CD4-positive, alpha-beta memory T cell (primary cell): ENCODE measurements at regions of chr22 and their contacts with region 1.

Region 1: GRCh38 chr22:23385291-23386244 is 194.5 kb downstream of the IGLL1 start:
- DNase-seq: peak; percentile 66 to 76 (median 68)
- H3K4me3 ChIP-seq: no peak overlapping the region
- H3K4me3 Mint-ChIP-seq: no peak overlapping the region
- H3K27ac ChIP-seq: no peak overlapping the region
- H3K27ac Mint-ChIP-seq: no peak overlapping the region
- H3K4me1 ChIP-seq: peaks cover 4% of the 10 kb centered on the region
- H3K4me1 Mint-ChIP-seq: no peaks in the 10 kb centered on the region
- H3K27me3 ChIP-seq: no peaks in the 10 kb centered on the region
- H3K27me3 Mint-ChIP-seq: peaks cover 0 to 8% of the 10 kb centered on the region in 2 donors

Region 2: GRCh38 chr22:23205339-23206049 is 180.1 kb before region 1 on chr22:
- CTCF ChIA-PET with region 1: no interaction called
- POLR2A ChIA-PET with region 1: no interaction called
- intact Hi-C with region 1: no loop called
- DNase-seq: no peak
- H3K4me3 ChIP-seq: no peak overlapping the region
- H3K4me3 Mint-ChIP-seq: no peak overlapping the region
- H3K27ac ChIP-seq: no peak overlapping the region
- H3K27ac Mint-ChIP-seq: peak overlapping the region in 2 of 7 donors; percentile 24 to 59
- H3K4me1 ChIP-seq: no peaks in the 10 kb centered on the region
- H3K4me1 Mint-ChIP-seq: peaks cover 20 to 54% (median 33%) of the 10 kb centered on the region in 4 donors
- H3K27me3 ChIP-seq: no peaks in the 10 kb centered on the region
- H3K27me3 Mint-ChIP-seq: no peaks in the 10 kb centered on the region

Region 3: GRCh38 chr22:23281406-23282088 is 104.0 kb before region 1 on chr22:
- CTCF ChIA-PET with region 1: interaction called, 4 read pairs
- POLR2A ChIA-PET with region 1: no interaction called
- intact Hi-C with region 1: loop called (anchors 10 kb)
- DNase-seq: peak; percentile 70 to 79 (median 74)
- H3K4me3 ChIP-seq: no peak overlapping the region
- H3K4me3 Mint-ChIP-seq: no peak overlapping the region
- H3K27ac ChIP-seq: no peak overlapping the region
- H3K27ac Mint-ChIP-seq: peak overlapping the region in 3 of 7 donors; percentile 42 to 70 (median 52)
- H3K4me1 ChIP-seq: peaks cover 11% of the 10 kb centered on the region
- H3K4me1 Mint-ChIP-seq: peaks cover 6 to 38% (median 14%) of the 10 kb centered on the region in 4 donors
- H3K27me3 ChIP-seq: no peaks in the 10 kb centered on the region
- H3K27me3 Mint-ChIP-seq: no peaks in the 10 kb centered on the region

Region 4: GRCh38 chr22:23539135-23539838 is 153.7 kb after region 1 on chr22:
- CTCF ChIA-PET with region 1: no interaction called
- POLR2A ChIA-PET with region 1: no interaction called
- intact Hi-C with region 1: loop called (anchors 5 kb)
- DNase-seq: peak; percentile 67 to 74 (median 70)
- H3K4me3 ChIP-seq: no peak overlapping the region
- H3K4me3 Mint-ChIP-seq: peak overlapping the region in 7 of 8 donors; percentile 29 to 79 (median 51)
- H3K27ac ChIP-seq: no peak overlapping the region
- H3K27ac Mint-ChIP-seq: peak overlapping the region in 3 of 7 donors; percentile 1 to 46 (median 31)
- H3K4me1 ChIP-seq: peaks cover 4% of the 10 kb centered on the region
- H3K4me1 Mint-ChIP-seq: peaks cover 3 to 10% (median 8%) of the 10 kb centered on the region in 4 donors
- H3K27me3 ChIP-seq: no peaks in the 10 kb centered on the region
- H3K27me3 Mint-ChIP-seq: peaks cover 1 to 5% of the 10 kb centered on the region in 2 donors